ENCODE measurements at regions of chr16 and their contacts with region 1.

Region 1: GRCh38 chr16:46621006-46621933 is at the start of gene SHCBP1:
- DNase-seq: peak; percentile 87
- ATAC-seq: peak; percentile 78
- H3K4me3 ChIP-seq: peak within 1 kb of the TSS; percentile 87 to 96 (median 89)
- H3K27ac ChIP-seq: peak within 1 kb of the TSS; percentile 58
- H3K4me1 ChIP-seq: peaks cover 22% of the 10 kb centered on the region
- H3K27me3 ChIP-seq: no peaks in the 10 kb centered on the region; a peak in 1 of 5 replicates
- CTCF ChIP-seq: no peak; the same call in 1 of the 2 replicates
- EP300 ChIP-seq: no peak
- POLR2A ChIP-seq: peak; percentile 68 to 84
- RAD21 ChIP-seq: peak; percentile 41
- total RNA-seq, gene SHCBP1: 33.0 and 48.9 TPM in 2 replicates

Region 2: DNA sequence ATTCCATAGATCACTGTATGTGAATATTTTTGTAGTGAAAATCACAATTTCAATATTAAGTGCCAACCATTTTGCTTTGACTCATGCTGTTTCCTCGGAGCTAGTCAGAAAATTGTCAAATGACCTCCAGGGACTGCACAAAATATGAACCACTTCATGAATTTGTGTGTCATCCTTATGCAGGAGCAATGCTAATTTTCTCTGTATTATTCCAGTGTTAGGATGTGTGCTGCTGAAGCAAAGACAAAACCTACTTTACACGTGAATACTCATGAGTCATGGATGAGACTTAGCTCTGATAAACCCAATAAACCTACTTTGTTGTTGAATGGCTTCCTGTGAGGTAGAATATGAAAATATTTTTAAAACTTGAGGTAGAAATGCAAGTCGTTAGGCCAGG is 65.3 kb before region 1 on chr16:
- CTCF ChIA-PET with region 1: no interaction called
- POLR2A ChIA-PET with region 1: no interaction called
- in situ Hi-C with region 1: no loop called
- intact Hi-C with region 1: loop called (anchors 1 kb)
- DNase-seq: no peak
- ATAC-seq: no peak
- H3K4me3 ChIP-seq: no peak overlapping the region
- H3K27ac ChIP-seq: no peak overlapping the region
- H3K4me1 ChIP-seq: peaks cover 12% of the 10 kb centered on the region; the same call in 1 of the 2 replicates
- H3K27me3 ChIP-seq: peaks cover 0 to 3% of the 10 kb centered on the region in 2 experiments; a peak in 2 of 5 replicates
- CTCF ChIP-seq: no peak
- EP300 ChIP-seq: no peak
- POLR2A ChIP-seq: no peak
- RAD21 ChIP-seq: no peak

Region 3: DNA sequence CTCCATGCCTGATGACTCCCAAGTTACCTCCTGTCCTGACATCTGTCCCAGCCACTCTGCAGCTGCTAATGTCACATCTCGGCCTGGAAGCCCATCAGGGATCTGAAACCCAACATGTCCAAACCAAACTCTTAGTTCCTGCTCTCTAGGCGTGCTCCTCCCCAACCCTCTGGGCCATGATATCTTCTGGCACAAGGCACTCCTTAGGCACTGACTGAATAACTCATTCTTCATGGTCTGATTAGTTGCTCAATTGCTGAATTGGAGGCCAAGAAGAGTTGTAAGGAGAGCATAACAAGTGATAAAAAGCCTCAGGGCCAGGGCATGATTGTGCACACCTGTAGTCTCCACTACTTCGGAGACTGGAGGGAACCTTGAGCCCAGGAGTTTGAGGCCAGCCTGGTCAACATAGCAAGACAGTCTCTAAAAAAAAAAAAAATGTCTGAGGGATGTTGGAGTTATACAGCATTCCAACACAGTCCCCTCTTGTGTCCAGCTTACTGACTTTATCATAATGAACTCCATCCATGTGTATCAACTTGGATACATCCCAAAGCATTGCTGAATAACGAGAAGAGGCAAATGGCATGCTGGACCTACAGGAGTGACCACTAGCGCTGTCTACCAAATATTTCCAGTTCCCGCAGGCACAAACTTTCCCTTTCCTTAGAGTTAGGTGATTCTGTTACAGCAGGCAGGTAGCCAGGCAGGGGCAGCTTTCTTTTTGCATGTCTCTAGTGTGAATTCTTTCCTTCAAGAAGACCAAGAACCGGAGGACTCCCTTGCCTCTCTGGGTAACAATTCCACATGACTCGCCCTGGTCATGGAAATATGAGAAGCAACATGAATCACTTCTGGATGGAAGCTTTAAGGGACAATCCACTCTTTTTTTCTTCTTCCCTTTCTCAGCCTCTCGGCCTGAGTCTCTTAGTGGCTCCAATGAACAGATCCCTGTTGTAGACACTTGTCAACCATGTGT is 18.0 kb after region 1 on chr16:
- CTCF ChIA-PET with region 1: no interaction called
- POLR2A ChIA-PET with region 1: no interaction called
- in situ Hi-C with region 1: no loop called
- intact Hi-C with region 1: no loop called
- DNase-seq: no peak
- ATAC-seq: no peak
- H3K4me3 ChIP-seq: no peak overlapping the region
- H3K27ac ChIP-seq: no peak overlapping the region
- H3K4me1 ChIP-seq: no peaks in the 10 kb centered on the region
- H3K27me3 ChIP-seq: peaks cover 2 to 15% of the 10 kb centered on the region in 2 experiments; a peak in 3 of 5 replicates
- CTCF ChIP-seq: no peak
- EP300 ChIP-seq: no peak
- POLR2A ChIP-seq: no peak
- RAD21 ChIP-seq: no peak